Natural killer cell (primary cell): ENCODE measurements at regions of chr11 and their contacts with region 1.

Region 1: DNA sequence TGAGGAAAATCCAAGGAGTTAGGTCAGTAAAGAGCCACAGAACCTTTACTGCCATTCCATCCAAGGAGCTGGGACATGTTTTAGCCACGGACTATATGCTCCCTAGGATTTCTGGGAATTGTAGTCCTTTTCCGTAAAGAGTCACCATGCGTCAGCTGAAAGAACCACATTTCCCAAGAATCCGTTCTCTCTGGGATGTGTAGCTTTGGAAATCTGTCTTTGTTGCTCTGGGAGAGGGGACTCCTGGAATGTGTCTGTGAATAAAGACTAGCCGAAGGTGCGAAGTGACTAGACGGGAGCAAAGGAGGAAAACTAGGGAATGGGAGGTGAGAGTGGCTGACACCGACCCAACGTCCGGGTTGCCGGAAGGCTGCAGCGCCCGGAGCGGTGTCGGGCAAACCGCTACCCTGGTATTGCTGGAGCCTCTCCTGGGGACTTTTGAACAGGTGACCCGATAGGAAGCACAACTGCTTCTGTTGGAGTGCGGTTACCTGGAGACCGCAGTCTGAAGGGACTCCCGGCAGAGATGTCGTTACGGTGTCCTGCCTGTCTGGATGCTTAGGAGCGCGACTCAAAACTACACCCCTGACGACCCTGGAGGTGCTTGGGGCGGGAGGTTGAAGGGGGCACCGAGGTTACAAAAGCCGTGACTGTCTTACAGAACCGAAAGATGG is at the start of gene IFTAP:
- DNase-seq: peak in 1 of 2 donors; percentile 54
- ATAC-seq: peak; percentile 54 to 81 (median 73)
- H3K4me3 ChIP-seq: peak within 1 kb of the TSS; percentile 61
- H3K4me3 Mint-ChIP-seq: peak within 1 kb of the TSS; percentile 94
- H3K27ac ChIP-seq: no peak within 1 kb of the TSS
- H3K27ac Mint-ChIP-seq: peak within 1 kb of the TSS in 1 of 2 donors; percentile 66
- H3K4me1 ChIP-seq: peaks cover 6% of the 10 kb centered on the region
- H3K4me1 Mint-ChIP-seq: peaks cover 11% of the 10 kb centered on the region in 2 donors
- H3K27me3 ChIP-seq: peaks cover 35% of the 10 kb centered on the region
- H3K27me3 Mint-ChIP-seq: peaks cover 26 to 50% of the 10 kb centered on the region in 2 donors
- CTCF ChIP-seq: no peak
- total RNA-seq, gene IFTAP: 0.94 to 1.9 (median 1.8) TPM

Region 2: GRCh38 chr11:37394236-37394870 is 799.9 kb after region 1 on chr11:
- intact Hi-C with region 1: loop called (anchors 10 kb)
- DNase-seq: no peak
- ATAC-seq: no peak
- H3K4me3 ChIP-seq: no peak overlapping the region
- H3K4me3 Mint-ChIP-seq: no peak overlapping the region
- H3K27ac ChIP-seq: no peak overlapping the region
- H3K27ac Mint-ChIP-seq: no peak overlapping the region
- H3K4me1 ChIP-seq: no peaks in the 10 kb centered on the region
- H3K4me1 Mint-ChIP-seq: no peaks in the 10 kb centered on the region
- H3K27me3 ChIP-seq: no peaks in the 10 kb centered on the region
- H3K27me3 Mint-ChIP-seq: no peaks in the 10 kb centered on the region
- CTCF ChIP-seq: no peak